G401 (cell line): ENCODE measurements at regions of chr14 and their contacts with region 1.

Region 1: GRCh38 chr14:23068476-23069412 is 11.4 kb upstream of the CDH24 start:
- DNase-seq: peak; percentile 95

Region 2: GRCh38 chr14:22986508-22987054 is 82.2 kb before region 1 on chr14:
- in situ Hi-C with region 1: loop called (anchors 10 kb)
- DNase-seq: peak; percentile 93